ENCODE measurements at regions of chr17 and their contacts with region 1.

Region 1: GRCh38 chr17:81702971-81703746 is at the start of gene MRPL12:
- DNase-seq: peak; percentile 73 to 95 (median 90)
- ATAC-seq: peak; percentile 87
- H3K4me3 ChIP-seq: peak within 1 kb of the TSS; percentile 79 to 84
- H3K4me3 Mint-ChIP-seq: peak within 1 kb of the TSS; percentile 87
- H3K27ac ChIP-seq: peak within 1 kb of the TSS; percentile 96 to 97
- H3K27ac Mint-ChIP-seq: peak within 1 kb of the TSS; percentile 94
- H3K4me1 ChIP-seq: peaks cover 29% of the 10 kb centered on the region
- H3K4me1 Mint-ChIP-seq: peaks cover 31% of the 10 kb centered on the region
- H3K27me3 ChIP-seq: no peaks in the 10 kb centered on the region
- H3K27me3 Mint-ChIP-seq: no peaks in the 10 kb centered on the region
- CTCF ChIP-seq: no peak
- total RNA-seq, gene MRPL12: 33.2 to 36.6 TPM

Region 2: GRCh38 chr17:81558941-81559806 is 144.0 kb before region 1 on chr17:
- CTCF ChIA-PET with region 1: no interaction called
- POLR2A ChIA-PET with region 1: no interaction called
- intact Hi-C with region 1: no loop called
- DNase-seq: no peak
- ATAC-seq: no peak
- H3K4me3 ChIP-seq: no peak overlapping the region
- H3K4me3 Mint-ChIP-seq: no peak overlapping the region
- H3K27ac ChIP-seq: no peak overlapping the region
- H3K27ac Mint-ChIP-seq: no peak overlapping the region
- H3K4me1 ChIP-seq: peaks cover 4% of the 10 kb centered on the region
- H3K4me1 Mint-ChIP-seq: peaks cover 2% of the 10 kb centered on the region
- H3K27me3 ChIP-seq: no peaks in the 10 kb centered on the region
- H3K27me3 Mint-ChIP-seq: no peaks in the 10 kb centered on the region
- CTCF ChIP-seq: no peak

Region 3: DNA sequence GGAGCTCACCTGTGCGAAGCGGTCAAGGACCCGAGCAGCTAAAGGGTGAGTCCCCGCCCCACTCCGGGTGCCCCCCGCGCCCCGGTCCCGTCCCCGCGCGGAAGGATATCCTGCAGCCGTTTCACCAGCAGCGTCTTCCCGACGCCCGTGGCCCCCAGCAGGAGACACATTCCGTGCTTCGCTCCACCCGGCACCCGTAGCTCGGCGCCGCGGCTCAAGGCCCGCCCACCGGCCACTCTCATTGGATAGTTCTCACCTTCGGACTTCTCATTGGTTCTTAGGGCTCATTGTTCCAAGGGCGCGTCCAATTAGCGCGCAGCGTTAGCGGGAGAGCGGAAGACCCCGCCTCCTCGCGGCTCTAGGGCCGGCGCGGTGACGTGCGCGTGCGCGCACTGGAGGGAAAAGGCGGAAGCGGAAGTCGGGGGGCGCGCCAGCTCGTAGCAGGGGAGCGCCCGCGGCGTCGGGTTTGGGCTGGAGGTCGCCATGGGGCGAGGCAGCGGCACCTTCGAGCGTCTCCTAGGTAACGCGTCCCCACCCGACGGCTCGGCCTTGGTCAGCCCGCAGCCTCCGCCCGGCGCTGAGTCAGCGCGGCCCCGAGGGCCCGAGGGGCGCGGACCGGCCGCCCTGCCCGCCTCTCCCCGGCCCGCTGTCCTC is 19.4 kb before region 1 on chr17 and contains the starts of genes ARL16 and HGS:
- CTCF ChIA-PET with region 1: interaction called, 3 read pairs
- POLR2A ChIA-PET with region 1: interaction called, 44 read pairs
- intact Hi-C with region 1: loop called (anchors 1 kb)
- DNase-seq: peak; percentile 95 to 99 (median 97)
- ATAC-seq: peak; percentile 98
- H3K4me3 ChIP-seq: peak within 1 kb of the TSS; percentile 89 to 98
- H3K4me3 Mint-ChIP-seq: peak within 1 kb of the TSS; percentile 89
- H3K27ac ChIP-seq: peak within 1 kb of the TSS; percentile 57 to 77
- H3K27ac Mint-ChIP-seq: peak within 1 kb of the TSS; percentile 88
- H3K4me1 ChIP-seq: peaks cover 27% of the 10 kb centered on the region
- H3K4me1 Mint-ChIP-seq: peaks cover 32% of the 10 kb centered on the region
- H3K27me3 ChIP-seq: no peaks in the 10 kb centered on the region
- H3K27me3 Mint-ChIP-seq: no peaks in the 10 kb centered on the region
- CTCF ChIP-seq: no peak
- total RNA-seq, gene ARL16: 14.3 to 16.4 TPM
- total RNA-seq, gene HGS: 121 to 126 TPM

Region 4: DNA sequence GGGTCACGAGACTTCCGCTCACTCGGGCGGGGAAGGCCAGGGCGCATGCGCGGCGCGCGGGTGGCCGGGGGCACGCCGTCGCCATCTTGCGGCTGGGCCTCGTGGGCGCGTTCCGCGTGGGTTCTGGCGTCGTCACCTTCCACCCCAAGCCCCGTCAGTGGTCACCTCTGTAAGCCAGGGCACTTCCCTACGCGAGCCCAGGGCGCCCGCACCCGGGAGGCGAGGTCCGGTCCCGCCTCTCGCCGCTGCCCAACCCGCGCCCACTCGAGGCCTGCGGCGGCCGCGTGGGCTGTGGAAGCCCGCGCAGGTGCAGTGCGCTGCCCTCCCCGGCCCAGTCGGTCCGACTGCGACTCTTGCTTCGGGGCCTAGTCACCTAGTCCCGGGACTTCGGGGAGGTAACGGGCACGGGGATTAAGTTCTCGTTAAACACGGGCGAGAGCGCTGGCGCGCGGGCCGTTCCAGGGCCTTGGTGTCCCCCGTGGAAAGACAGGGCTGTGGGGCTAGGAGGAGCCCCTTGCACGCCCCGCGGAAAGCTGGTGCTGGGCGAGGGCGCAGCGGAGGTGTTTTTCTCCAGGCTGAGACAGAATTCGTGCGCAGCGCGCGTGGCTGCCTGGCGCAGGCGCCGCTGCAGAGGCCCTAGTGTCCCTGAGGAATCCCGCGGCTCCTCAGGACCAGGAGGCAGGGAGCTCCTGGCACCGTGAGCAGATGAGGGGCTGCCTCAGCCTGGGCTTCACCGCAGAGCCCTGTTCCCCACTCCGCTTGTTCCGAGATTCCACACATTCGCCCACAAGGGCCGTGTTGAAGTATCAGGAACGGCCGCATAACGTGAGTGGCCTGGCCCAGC is 168.4 kb after region 1 on chr17:
- CTCF ChIA-PET with region 1: no interaction called
- POLR2A ChIA-PET with region 1: interaction called, 5 read pairs
- intact Hi-C with region 1: loop called in 1 of 2 experiments (anchors 5 kb)
- DNase-seq: peak; percentile 90 to 97 (median 96)
- ATAC-seq: peak; percentile 29
- H3K4me3 ChIP-seq: peak overlapping the region; percentile 93 to 94
- H3K4me3 Mint-ChIP-seq: peak overlapping the region; percentile 87
- H3K27ac ChIP-seq: peak overlapping the region; percentile 96 to 98
- H3K27ac Mint-ChIP-seq: peak overlapping the region; percentile 96
- H3K4me1 ChIP-seq: peaks cover 39% of the 10 kb centered on the region
- H3K4me1 Mint-ChIP-seq: peaks cover 40% of the 10 kb centered on the region
- H3K27me3 ChIP-seq: no peaks in the 10 kb centered on the region
- H3K27me3 Mint-ChIP-seq: no peaks in the 10 kb centered on the region
- CTCF ChIP-seq: no peak

Region 5: GRCh38 chr17:81917565-81918332 is 214.6 kb after region 1 on chr17 and contains the start of gene SIRT7:
- CTCF ChIA-PET with region 1: no interaction called
- POLR2A ChIA-PET with region 1: no interaction called
- intact Hi-C with region 1: loop called in 1 of 2 experiments (anchors 1 kb)
- DNase-seq: peak; percentile 67 to 92 (median 82)
- ATAC-seq: peak; percentile 93
- H3K4me3 ChIP-seq: peak within 1 kb of the TSS; percentile 63 to 69
- H3K4me3 Mint-ChIP-seq: peak within 1 kb of the TSS; percentile 91
- H3K27ac ChIP-seq: peak within 1 kb of the TSS; percentile 51 to 75
- H3K27ac Mint-ChIP-seq: peak within 1 kb of the TSS; percentile 88
- H3K4me1 ChIP-seq: peaks cover 14% of the 10 kb centered on the region
- H3K4me1 Mint-ChIP-seq: peaks cover 27% of the 10 kb centered on the region
- H3K27me3 ChIP-seq: no peaks in the 10 kb centered on the region
- H3K27me3 Mint-ChIP-seq: no peaks in the 10 kb centered on the region
- CTCF ChIP-seq: no peak
- total RNA-seq, gene SIRT7: 75.2 to 76.1 TPM

Measured in CD8-positive, alpha-beta T cell (primary cell).